Left cardiac atrium (tissue), 4 donors: ENCODE measurements at regions of chr17 and their contacts with region 1.

Region 1: DNA sequence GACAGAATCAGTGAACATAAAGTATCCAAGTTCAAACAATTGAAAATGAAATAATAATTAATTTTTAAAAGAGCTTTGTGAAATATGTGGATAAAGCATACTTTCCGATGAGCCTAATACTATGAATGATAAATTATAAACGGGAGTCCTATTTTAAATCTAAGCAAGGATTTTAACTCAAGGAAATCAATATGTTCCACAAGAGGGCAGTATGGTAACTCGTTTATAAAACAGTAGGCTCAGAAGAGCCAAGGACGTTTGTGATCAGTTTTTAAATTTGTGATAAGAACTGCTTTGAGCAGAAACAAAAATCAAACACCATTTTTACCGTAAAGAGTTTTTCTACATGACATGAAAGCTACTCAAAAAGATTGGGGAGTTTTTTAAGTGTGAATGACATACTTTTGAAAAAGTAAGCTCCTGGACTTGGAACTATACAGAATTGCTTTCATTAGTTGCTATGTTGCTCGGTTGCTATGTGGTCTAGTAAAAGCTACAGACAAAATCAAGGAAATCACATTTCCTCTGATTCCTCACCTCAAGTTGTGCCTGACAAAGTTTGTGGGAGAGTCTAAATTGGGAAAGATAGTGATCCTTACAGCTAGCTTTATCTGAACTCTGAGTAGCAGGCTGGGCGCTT is 11.8 kb upstream of the TEKT1 start:
- DNase-seq: no peak
- ATAC-seq: peak in 1 of 2 donors; percentile 65

Region 2: DNA sequence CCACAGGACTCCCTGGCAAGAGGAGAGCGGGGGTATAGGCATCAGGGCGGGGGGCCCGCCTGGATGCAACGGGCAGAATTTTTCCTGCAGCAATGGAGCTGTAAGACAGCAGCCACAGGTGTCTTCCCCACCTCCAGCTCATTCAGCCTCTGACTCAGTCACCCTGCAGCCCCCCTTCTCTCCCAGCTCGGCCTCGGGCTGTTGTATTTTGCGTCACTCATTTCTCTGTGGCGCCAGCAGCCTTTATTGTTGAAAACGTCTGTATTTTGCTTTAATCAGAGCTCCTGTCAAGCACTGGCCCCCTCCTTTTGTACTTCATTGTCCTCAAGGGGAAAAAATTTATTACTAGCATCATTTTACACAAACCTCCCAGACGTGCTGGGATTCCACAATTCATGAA is 655.5 kb before region 1 on chr17:
- intact Hi-C with region 1: no loop called
- DNase-seq: no peak
- ATAC-seq: no peak

Region 3: GRCh38 chr17:6523330-6523729 is 320.0 kb before region 1 on chr17:
- intact Hi-C with region 1: no loop called
- DNase-seq: no peak
- ATAC-seq: peak in 1 of 2 donors; percentile 49

Region 4: GRCh38 chr17:6666077-6666521 is 177.3 kb before region 1 on chr17:
- intact Hi-C with region 1: loop called in 1 of 2 experiments (anchors 2 kb)
- DNase-seq: peak; percentile 67
- ATAC-seq: peak; percentile 88 to 94